ENCODE measurements at regions of chr2 and their contacts with region 1.

Region 1: GRCh38 chr2:232521959-232522622 is 1.9 kb downstream of the PRSS56 start:
- DNase-seq: peak; percentile 70
- ATAC-seq: peak; percentile 79
- H3K4me3 Mint-ChIP-seq: no peak overlapping the region
- H3K27ac Mint-ChIP-seq: no peak overlapping the region
- H3K4me1 Mint-ChIP-seq: peaks cover 9% of the 10 kb centered on the region
- H3K27me3 Mint-ChIP-seq: peaks cover 30% of the 10 kb centered on the region

Region 2: DNA sequence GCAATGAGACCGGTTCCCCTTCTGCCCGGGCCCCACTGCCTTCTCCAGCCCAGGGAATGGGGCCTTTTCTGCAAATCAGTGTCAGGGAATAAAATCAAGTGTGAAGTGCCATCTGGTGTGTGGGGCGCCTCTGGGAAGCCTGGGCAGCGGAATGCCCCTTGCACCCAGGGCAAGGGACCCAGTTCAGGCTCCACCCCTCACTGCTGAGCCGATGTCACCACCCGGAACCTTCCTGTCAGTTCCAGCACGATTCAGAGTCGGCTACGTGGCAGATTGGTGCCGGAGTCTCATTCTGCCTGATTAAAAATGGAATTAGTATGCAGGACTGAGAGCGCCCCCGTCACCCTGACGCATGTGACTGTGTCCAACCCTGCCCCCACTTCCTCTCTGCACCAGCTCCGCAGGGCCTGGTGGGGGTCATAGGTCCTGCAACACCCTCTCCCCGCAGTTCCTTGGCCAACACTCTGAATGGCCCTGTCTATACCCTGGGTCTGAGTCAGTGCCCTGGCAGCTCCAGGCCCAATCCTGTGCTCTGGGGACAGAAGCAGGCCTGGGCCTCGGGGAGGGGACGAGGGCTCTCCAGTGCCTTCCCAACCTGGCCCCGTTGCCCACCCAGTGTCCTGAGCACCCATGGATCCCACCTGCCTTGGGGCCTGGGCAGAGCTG is 74.3 kb before region 1 on chr2:
- CTCF ChIA-PET with region 1: interaction called, 12 read pairs
- POLR2A ChIA-PET with region 1: no interaction called
- DNase-seq: no peak
- ATAC-seq: no peak
- H3K4me3 Mint-ChIP-seq: no peak overlapping the region
- H3K27ac Mint-ChIP-seq: no peak overlapping the region
- H3K4me1 Mint-ChIP-seq: no peaks in the 10 kb centered on the region
- H3K27me3 Mint-ChIP-seq: no peaks in the 10 kb centered on the region

Region 3: DNA sequence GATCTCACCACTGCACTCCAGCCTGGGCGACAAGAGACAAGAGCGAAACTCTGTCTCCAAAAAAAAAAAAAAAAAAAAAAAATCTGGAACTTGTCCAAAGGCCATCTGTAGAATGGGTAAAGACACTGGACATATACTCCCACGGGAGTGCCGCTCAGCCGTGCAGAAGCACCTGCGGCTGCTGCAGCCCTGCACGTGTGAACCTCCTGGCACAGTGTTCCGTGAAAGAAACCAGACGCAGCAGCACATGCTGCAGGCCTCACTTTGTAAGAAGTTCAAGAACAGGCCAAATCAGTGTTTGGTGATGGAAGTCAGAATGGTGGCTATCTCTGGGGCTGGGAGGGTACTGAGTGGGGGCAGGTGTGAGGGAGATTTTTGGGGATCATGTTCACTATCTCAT is 10.3 kb after region 1 on chr2:
- CTCF ChIA-PET with region 1: interaction called, 10 read pairs
- POLR2A ChIA-PET with region 1: no interaction called
- DNase-seq: no peak
- ATAC-seq: no peak
- H3K4me3 Mint-ChIP-seq: no peak overlapping the region
- H3K27ac Mint-ChIP-seq: no peak overlapping the region
- H3K4me1 Mint-ChIP-seq: peaks cover 12% of the 10 kb centered on the region
- H3K27me3 Mint-ChIP-seq: peaks cover 11% of the 10 kb centered on the region

Measured in activated CD8-positive, alpha-beta T cell treated with anti-CD3 and anti-CD28 coated beads, Interleukin-2, amount 10 ng/mL, durations not matched to agents 7 days and 5 days (primary cell).